ENCODE measurements at regions of chr17 and their contacts with region 1.

Region 1: DNA sequence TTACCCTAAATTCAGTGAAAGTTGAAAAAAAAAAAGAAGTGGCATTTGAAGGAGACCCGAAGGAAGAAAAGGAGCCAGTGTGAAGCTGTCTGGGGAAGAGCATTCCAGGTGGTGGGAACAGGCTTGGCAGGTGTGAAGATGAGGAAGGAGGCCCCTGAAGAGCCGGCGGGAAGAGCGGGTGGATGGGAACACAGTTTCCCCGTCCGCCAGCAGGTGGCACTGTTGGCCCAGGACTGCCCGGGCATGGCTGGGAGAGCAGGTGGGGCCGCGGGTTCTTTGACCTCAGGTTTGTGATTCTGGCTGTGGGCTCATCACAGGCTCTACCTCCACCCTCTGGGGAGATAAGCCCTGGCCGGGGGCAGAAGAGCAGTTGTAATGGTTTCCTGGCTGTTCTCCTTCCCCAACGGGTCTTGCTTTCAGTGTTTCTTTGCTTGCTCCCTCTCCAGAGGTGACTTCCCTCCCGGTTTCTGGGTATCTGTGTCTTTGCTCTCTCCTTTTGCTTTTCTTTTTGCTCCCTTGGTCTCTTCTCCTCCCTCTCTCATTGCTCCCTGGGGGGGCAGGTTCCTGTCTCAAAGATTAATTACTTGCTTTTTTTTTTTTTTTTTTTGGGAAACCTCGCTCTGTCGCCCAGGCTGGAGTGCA is 32.3 kb downstream of the RAP1GAP2 start:
- DNase-seq: peak; percentile 55 to 86 (median 74)
- ATAC-seq: peak; percentile 92
- H3K4me3 ChIP-seq: no peak overlapping the region
- H3K4me3 Mint-ChIP-seq: no peak overlapping the region
- H3K27ac ChIP-seq: no peak overlapping the region
- H3K27ac Mint-ChIP-seq: no peak overlapping the region
- H3K4me1 ChIP-seq: peaks cover 34% of the 10 kb centered on the region
- H3K4me1 Mint-ChIP-seq: peaks cover 27% of the 10 kb centered on the region
- H3K27me3 ChIP-seq: no peaks in the 10 kb centered on the region
- H3K27me3 Mint-ChIP-seq: no peaks in the 10 kb centered on the region
- CTCF ChIP-seq: peak; percentile 97

Region 2: GRCh38 chr17:2758870-2759269 is 69.6 kb before region 1 on chr17:
- CTCF ChIA-PET with region 1: no interaction called
- POLR2A ChIA-PET with region 1: no interaction called
- intact Hi-C with region 1: no loop called
- DNase-seq: no peak
- ATAC-seq: no peak
- H3K4me3 ChIP-seq: no peak overlapping the region
- H3K4me3 Mint-ChIP-seq: no peak overlapping the region
- H3K27ac ChIP-seq: no peak overlapping the region
- H3K27ac Mint-ChIP-seq: no peak overlapping the region
- H3K4me1 ChIP-seq: peaks cover 10% of the 10 kb centered on the region
- H3K4me1 Mint-ChIP-seq: no peaks in the 10 kb centered on the region
- H3K27me3 ChIP-seq: peaks cover 35 to 36% of the 10 kb centered on the region in 2 experiments
- H3K27me3 Mint-ChIP-seq: peaks cover 59% of the 10 kb centered on the region
- CTCF ChIP-seq: no peak

Region 3: DNA sequence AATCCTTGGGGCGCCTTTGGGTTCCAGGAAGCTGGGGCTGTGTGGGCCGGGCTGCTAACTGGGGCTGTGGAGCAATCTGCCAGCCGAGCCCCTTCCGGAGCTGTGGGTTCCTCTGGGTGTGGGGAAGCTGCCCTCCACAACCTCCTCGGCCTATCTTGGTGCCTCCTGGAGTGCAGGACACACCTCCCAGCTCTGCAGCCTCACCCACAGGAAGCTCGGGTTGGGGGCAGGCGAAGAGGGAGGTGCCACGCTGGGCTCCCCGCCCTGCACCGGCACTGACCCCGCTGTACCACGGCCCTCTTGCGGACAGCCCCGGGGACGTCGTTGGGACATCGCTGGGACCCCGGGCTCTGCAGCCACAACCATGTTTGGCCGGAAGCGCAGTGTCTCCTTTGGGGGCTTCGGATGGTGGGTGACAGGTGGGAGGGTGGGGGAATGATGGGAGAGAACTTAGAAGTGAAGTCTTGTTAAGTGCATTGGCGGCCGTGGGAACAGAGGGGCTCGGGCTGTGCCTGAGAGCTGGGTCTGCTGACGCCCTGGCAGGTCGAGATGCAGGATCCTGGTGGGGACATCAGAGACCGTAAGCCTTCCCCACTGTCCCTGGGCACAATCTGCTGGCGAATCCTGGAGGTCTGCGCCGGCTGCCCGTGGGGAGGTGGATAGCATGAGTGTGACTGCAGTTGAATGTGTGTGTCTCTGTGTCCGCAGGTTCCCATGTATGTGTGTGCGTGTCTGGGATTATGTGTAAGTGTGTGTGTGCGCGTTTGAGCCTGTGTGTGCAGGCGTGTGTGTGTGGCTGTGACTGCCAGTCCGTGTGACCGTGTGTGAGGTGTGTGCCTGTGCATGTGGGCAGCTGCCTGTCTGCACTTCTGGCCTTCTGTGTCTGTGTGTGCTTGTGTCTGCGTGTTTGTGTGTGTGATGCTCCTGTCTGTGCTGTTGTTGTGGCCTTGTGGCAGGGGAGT is 32.1 kb before region 1 on chr17 and contains the start of gene RAP1GAP2:
- CTCF ChIA-PET with region 1: interaction called, 3 read pairs
- POLR2A ChIA-PET with region 1: interaction called, 3 read pairs
- intact Hi-C with region 1: loop called in 1 of 2 experiments (anchors 2 kb)
- DNase-seq: peak; percentile 45 to 94 (median 66)
- ATAC-seq: peak; percentile 91
- H3K4me3 ChIP-seq: peak within 1 kb of the TSS; percentile 68
- H3K4me3 Mint-ChIP-seq: peak within 1 kb of the TSS; percentile 92
- H3K27ac ChIP-seq: no peak within 1 kb of the TSS
- H3K27ac Mint-ChIP-seq: peak within 1 kb of the TSS; percentile 80
- H3K4me1 ChIP-seq: peaks cover 79% of the 10 kb centered on the region
- H3K4me1 Mint-ChIP-seq: peaks cover 79% of the 10 kb centered on the region
- H3K27me3 ChIP-seq: no peaks in the 10 kb centered on the region
- H3K27me3 Mint-ChIP-seq: no peaks in the 10 kb centered on the region
- CTCF ChIP-seq: no peak
- total RNA-seq, gene RAP1GAP2: 46.3 to 49.7 TPM

Region 4: DNA sequence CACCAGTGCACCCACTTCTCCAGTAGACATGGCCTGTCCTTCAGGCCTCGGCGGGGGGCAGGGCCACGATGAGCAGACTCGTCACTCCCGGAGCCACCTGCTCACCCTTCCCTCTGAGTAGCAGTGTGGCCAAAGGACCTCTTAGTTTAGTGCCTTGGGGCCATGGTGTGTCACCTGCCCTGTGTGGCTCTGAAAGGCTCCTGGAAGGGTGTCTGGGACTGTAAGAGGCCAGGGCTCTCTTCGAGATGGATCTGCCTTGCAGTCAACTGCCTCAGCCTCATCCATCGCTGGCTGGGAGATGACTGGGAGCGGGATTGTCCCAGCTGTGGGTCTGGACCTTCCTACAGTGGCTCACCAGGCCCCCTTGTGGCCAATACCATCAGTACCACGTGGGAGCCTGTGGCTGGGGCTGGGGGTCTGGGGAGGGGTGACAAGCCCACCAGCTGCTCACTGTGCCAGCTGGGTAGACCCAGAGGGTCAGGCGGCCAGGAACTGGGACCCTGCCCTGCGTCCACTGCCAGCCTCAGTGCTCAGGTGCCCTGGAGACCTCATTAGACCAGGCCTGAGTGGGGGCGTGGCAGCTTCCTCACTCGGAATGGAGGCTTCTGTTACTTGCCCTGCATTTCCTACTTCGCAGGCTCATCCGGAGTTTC is 101.5 kb after region 1 on chr17:
- CTCF ChIA-PET with region 1: no interaction called
- POLR2A ChIA-PET with region 1: no interaction called
- intact Hi-C with region 1: loop called in 1 of 2 experiments (anchors 1 kb)
- DNase-seq: peak in 6 of 14 experiments; percentile 9 to 49 (median 36)
- ATAC-seq: no peak
- H3K4me3 ChIP-seq: no peak overlapping the region
- H3K4me3 Mint-ChIP-seq: no peak overlapping the region
- H3K27ac ChIP-seq: no peak overlapping the region
- H3K27ac Mint-ChIP-seq: no peak overlapping the region
- H3K4me1 ChIP-seq: peaks cover 20% of the 10 kb centered on the region
- H3K4me1 Mint-ChIP-seq: peaks cover 19% of the 10 kb centered on the region
- H3K27me3 ChIP-seq: no peaks in the 10 kb centered on the region
- H3K27me3 Mint-ChIP-seq: no peaks in the 10 kb centered on the region
- CTCF ChIP-seq: peak; percentile 75

Region 5: GRCh38 chr17:3012926-3013581 is 184.5 kb after region 1 on chr17:
- CTCF ChIA-PET with region 1: no interaction called
- POLR2A ChIA-PET with region 1: no interaction called
- intact Hi-C with region 1: loop called (anchors 1 to 2 kb)
- DNase-seq: peak; percentile 32 to 69 (median 50)
- ATAC-seq: peak; percentile 87
- H3K4me3 ChIP-seq: no peak overlapping the region
- H3K4me3 Mint-ChIP-seq: no peak overlapping the region
- H3K27ac ChIP-seq: no peak overlapping the region
- H3K27ac Mint-ChIP-seq: no peak overlapping the region
- H3K4me1 ChIP-seq: no peaks in the 10 kb centered on the region
- H3K4me1 Mint-ChIP-seq: no peaks in the 10 kb centered on the region
- H3K27me3 ChIP-seq: no peaks in the 10 kb centered on the region
- H3K27me3 Mint-ChIP-seq: no peaks in the 10 kb centered on the region
- CTCF ChIP-seq: peak; percentile 69

Region 6: DNA sequence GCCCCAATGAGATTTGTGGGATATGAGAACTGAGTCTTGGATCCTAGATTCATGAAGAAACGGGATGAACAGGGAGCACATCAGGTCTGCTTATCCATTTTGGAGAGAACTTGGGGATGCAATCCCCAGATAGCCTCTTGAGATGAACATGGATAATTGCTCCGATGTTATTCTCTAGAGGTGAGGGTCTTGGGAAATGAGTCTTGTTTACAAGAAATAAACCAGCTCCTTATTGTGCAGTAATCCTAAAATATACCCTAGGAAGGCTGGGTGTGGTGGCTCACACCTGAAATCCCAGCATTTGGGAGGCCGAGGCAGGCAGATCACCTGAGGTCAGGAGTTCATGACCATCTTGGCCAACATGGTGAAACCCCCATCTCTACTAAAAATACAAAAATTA is 275.8 kb after region 1 on chr17 and contains the start of gene OR1D2:
- CTCF ChIA-PET with region 1: no interaction called
- POLR2A ChIA-PET with region 1: no interaction called
- intact Hi-C with region 1: no loop called
- DNase-seq: no peak
- ATAC-seq: no peak
- H3K4me3 ChIP-seq: no peak within 1 kb of the TSS
- H3K4me3 Mint-ChIP-seq: no peak within 1 kb of the TSS
- H3K27ac ChIP-seq: no peak within 1 kb of the TSS
- H3K27ac Mint-ChIP-seq: no peak within 1 kb of the TSS
- H3K4me1 ChIP-seq: no peaks in the 10 kb centered on the region
- H3K4me1 Mint-ChIP-seq: no peaks in the 10 kb centered on the region
- H3K27me3 ChIP-seq: peaks cover 0 to 6% of the 10 kb centered on the region in 2 experiments
- H3K27me3 Mint-ChIP-seq: peaks cover 15% of the 10 kb centered on the region
- CTCF ChIP-seq: no peak
- total RNA-seq, gene OR1D2: not detected

Region 7: DNA sequence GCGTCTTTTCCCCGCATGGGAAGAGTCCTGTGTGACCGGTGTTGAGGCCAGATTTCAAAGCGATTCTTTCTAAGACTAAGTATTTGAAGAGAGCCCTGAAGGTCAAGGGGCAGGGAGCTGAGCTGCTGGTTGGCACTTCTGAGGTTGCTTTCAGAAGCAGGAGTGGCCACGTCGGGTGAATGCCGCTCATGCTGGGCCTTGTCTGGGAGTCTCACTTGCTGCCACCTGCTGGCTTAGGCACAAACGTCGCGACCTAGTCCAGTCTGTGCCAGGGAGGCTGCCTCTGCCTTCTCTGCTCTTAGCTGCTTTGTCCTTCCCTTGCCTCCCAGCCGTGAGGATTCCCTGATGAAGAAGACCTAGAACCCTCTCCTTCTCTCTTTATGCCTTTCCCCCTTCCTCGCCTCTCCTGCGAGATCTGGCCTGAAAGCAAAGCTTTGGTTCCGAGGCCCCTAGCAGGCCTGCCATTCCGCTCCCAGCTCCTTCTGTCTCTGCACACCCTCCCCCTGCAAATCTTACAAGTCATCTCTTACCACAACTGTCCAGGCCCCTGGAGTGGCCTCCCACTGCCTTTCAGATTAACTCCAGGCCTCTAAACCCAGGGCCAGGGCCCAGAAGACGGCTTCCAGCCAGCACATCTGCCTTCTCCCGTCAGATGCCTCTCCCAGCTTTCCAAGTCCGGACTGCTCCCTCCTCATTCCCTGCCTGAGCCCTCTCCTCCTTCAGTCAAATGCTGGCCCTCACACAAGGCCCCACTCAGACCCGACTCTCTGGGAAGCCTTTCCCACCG is 819.4 kb after region 1 on chr17:
- CTCF ChIA-PET with region 1: no interaction called
- POLR2A ChIA-PET with region 1: no interaction called
- intact Hi-C with region 1: loop called in 1 of 2 experiments (anchors 10 kb)
- DNase-seq: peak in 10 of 14 experiments; percentile 14 to 60 (median 32)
- ATAC-seq: peak; percentile 68
- H3K4me3 ChIP-seq: no peak overlapping the region
- H3K4me3 Mint-ChIP-seq: no peak overlapping the region
- H3K27ac ChIP-seq: no peak overlapping the region
- H3K27ac Mint-ChIP-seq: no peak overlapping the region
- H3K4me1 ChIP-seq: peaks cover 3% of the 10 kb centered on the region
- H3K4me1 Mint-ChIP-seq: no peaks in the 10 kb centered on the region
- H3K27me3 ChIP-seq: no peaks in the 10 kb centered on the region
- H3K27me3 Mint-ChIP-seq: no peaks in the 10 kb centered on the region
- CTCF ChIP-seq: peak; percentile 20